ENCODE measurements at regions of chr14 and their contacts with region 1.

Region 1: DNA sequence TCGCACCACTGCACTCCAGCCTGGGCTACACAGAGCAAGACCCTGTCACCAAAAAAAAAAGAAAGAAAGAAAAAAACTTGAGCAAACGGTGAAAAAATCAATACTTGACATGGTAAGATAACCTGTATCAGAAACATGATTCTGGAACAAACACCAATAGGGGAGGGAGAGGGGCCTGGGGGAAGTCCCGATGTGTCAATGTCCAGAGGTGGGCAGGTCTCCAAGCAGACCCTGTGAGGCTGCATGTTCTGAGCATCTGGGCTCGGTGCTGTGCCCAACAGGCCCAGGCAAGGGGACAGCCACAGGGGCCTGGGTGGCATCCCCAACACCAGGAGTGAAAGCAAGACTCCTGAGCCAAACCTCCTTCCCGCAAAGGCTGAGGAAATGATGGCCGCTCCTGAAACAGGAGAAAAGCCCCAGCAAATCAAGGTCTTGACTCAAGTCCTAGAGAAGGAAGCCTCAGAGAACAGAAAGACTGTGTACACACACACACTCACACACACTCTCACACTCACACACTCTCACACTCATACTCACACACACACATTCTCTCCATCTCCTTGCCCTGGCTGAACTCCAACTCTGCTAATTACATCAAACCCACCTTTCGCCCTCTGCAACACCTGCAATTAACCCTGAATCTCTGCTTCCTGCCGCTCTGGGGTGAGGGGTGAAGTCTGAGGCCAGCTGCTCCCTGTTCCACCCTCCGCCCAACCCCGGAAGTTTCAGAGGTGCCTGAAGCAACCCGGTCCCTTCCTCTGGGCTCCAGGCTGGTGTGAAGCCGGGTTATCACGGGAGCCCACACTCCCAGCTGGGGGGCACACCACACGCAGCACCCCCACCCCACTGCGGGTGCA is 20.4 kb downstream of the CCDC88C start:
- DNase-seq: peak in 1 of 2 experiments; percentile 67
- H3K4me3 ChIP-seq: no peak overlapping the region
- H3K27ac ChIP-seq: no peak overlapping the region
- H3K4me1 ChIP-seq: peaks cover 35 to 66% (median 51%) of the 10 kb centered on the region in 4 experiments
- H3K27me3 ChIP-seq: no peaks in the 10 kb centered on the region
- CTCF ChIP-seq: no peak
- EP300 ChIP-seq: no peak
- POLR2A ChIP-seq: no peak
- RAD21 ChIP-seq: no peak

Region 2: DNA sequence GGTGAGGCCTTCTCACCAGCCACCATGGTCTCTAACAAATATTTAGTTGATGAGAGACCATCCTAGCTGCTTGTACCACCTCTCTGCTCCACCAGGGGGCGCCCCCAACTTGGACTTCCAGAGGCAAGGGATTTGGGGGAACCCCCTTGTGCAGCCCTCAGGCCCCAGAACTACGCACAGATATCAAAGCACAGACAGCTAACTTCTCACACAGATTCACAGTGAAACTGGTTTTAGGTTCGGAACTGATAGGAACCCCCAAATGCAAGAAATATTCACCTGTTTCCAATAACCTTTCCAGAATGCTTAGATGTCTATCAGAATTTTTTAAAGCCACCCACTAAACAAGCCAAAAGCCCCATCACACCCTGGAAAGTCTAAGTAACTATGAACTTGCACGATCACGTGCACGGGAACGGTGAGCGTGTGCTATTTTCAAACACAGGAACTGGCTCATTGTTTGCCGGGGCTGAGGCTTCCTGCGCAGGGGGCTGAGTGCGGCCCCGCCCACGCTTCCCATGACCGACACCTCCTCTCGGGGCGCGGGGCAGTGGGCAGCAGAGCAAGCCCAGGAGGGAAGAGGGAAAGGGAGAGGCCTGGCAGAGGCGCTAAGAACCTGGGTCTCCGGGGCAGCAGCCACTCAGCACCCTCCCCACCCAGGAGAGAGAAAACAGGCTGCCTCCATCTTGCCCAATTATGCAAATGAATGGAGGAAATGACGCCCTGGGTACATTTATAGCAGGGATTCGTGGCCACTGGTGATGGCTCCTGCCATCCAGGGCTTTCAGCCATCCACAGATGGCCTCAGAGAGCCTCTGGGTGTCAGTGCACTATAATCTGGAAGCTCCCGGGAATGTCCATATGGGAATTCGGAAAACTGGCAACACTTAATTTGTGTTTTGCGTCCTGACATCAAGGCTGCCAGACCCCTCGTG is 73.2 kb before region 1 on chr14:
- CTCF ChIA-PET with region 1: interaction called, 12 read pairs
- POLR2A ChIA-PET with region 1: no interaction called
- DNase-seq: peak; percentile 47 to 98
- H3K4me3 ChIP-seq: no peak overlapping the region
- H3K27ac ChIP-seq: no peak overlapping the region
- H3K4me1 ChIP-seq: peaks cover 0 to 2% (median 0%) of the 10 kb centered on the region in 4 experiments; a peak in 2 of 7 replicates
- H3K27me3 ChIP-seq: no peaks in the 10 kb centered on the region
- CTCF ChIP-seq: peak; percentile 80 to 90 (median 85)
- EP300 ChIP-seq: no peak
- POLR2A ChIP-seq: no peak
- RAD21 ChIP-seq: peak; percentile 89 to 95

Region 3: DNA sequence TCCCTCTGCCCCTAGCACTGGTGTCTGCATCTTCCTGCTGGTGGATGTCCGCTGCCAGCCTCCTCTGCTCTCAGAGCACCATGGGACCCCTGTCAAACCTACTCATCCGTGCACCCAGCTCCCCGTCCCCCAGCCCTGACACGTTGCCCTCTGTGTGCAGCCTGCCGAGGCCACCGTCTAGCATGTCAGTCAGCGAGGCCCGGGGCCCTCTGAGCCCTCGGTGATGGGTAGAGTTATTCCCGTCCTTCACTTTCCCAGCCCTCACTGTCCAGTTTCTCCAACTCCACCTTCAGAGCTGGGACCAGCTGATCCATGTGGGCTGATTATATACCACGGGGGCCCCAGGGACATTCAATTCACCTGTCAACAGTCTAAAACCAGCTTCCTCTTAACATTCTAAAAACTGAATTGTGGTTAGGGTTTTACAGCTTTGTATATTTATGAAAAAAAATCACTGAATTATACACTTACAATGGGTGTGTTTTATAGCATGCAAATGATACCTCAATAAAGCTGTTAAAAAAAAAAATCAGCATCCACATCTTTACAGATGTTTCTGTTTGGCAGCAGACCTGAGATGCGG is 40.9 kb before region 1 on chr14:
- CTCF ChIA-PET with region 1: interaction called, 14 read pairs
- POLR2A ChIA-PET with region 1: interaction called, 5 read pairs
- DNase-seq: no peak
- H3K4me3 ChIP-seq: no peak overlapping the region
- H3K27ac ChIP-seq: no peak overlapping the region
- H3K4me1 ChIP-seq: peaks cover 0 to 19% (median 12%) of the 10 kb centered on the region in 4 experiments; a peak in 6 of 7 replicates
- H3K27me3 ChIP-seq: no peaks in the 10 kb centered on the region
- CTCF ChIP-seq: no peak
- EP300 ChIP-seq: no peak
- POLR2A ChIP-seq: no peak
- RAD21 ChIP-seq: no peak

Region 4: GRCh38 chr14:91373591-91374254 is 23.5 kb before region 1 on chr14:
- CTCF ChIA-PET with region 1: interaction called, 31 read pairs
- POLR2A ChIA-PET with region 1: interaction called, 4 read pairs
- DNase-seq: no peak
- H3K4me3 ChIP-seq: no peak overlapping the region
- H3K27ac ChIP-seq: no peak overlapping the region
- H3K4me1 ChIP-seq: peaks cover 6 to 61% (median 36%) of the 10 kb centered on the region in 4 experiments
- H3K27me3 ChIP-seq: no peaks in the 10 kb centered on the region
- CTCF ChIP-seq: no peak
- EP300 ChIP-seq: no peak
- POLR2A ChIP-seq: no peak
- RAD21 ChIP-seq: no peak

Region 5: GRCh38 chr14:91410771-91411536 is 13.8 kb after region 1 on chr14:
- CTCF ChIA-PET with region 1: interaction called, 10 read pairs
- POLR2A ChIA-PET with region 1: interaction called, 66 read pairs
- DNase-seq: no peak
- H3K4me3 ChIP-seq: no peak overlapping the region
- H3K27ac ChIP-seq: no peak overlapping the region
- H3K4me1 ChIP-seq: peaks cover 2 to 19% (median 16%) of the 10 kb centered on the region in 4 experiments; a peak in 5 of 7 replicates
- H3K27me3 ChIP-seq: no peaks in the 10 kb centered on the region
- CTCF ChIP-seq: no peak
- EP300 ChIP-seq: no peak
- POLR2A ChIP-seq: no peak
- RAD21 ChIP-seq: no peak

Region 6: GRCh38 chr14:91418387-91419043 is 21.3 kb after region 1 on chr14:
- CTCF ChIA-PET with region 1: interaction called, 10 read pairs
- POLR2A ChIA-PET with region 1: interaction called, 66 read pairs
- DNase-seq: peak; percentile 39 to 96
- H3K4me3 ChIP-seq: peak overlapping the region; percentile 35 to 92 (median 63)
- H3K27ac ChIP-seq: no peak overlapping the region
- H3K4me1 ChIP-seq: peaks cover 7 to 26% (median 13%) of the 10 kb centered on the region in 4 experiments; a peak in 6 of 7 replicates
- H3K27me3 ChIP-seq: peaks cover 0 to 6% (median 3%) of the 10 kb centered on the region in 4 experiments; a peak in 2 of 7 replicates
- CTCF ChIP-seq: peak; percentile 90 to 92 (median 91)
- EP300 ChIP-seq: no peak
- POLR2A ChIP-seq: no peak
- RAD21 ChIP-seq: peak; percentile 90 to 91

Region 7: DNA sequence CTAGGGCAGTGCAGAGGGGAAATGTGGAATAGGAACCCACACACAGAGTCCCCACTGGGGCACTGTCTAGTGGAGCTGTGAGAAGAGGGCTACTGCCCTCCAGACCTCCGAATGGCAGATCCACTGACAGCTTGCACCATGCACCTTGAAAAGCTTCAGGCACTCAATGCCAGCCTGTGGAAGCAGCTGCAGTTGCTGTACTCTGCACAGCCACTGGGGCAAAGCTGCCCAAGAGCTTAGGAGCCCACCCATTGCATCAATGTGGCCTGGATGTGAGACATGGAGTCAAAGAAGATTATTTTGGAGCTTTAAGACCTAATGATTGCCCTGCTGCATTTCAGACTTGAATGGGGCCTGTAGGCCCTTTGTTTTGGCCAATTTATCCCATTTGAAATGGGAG is 42.2 kb after region 1 on chr14:
- CTCF ChIA-PET with region 1: no interaction called
- POLR2A ChIA-PET with region 1: no interaction called
- DNase-seq: no peak
- H3K4me3 ChIP-seq: no peak overlapping the region
- H3K27ac ChIP-seq: no peak overlapping the region
- H3K4me1 ChIP-seq: no peaks in the 10 kb centered on the region
- H3K27me3 ChIP-seq: no peaks in the 10 kb centered on the region
- CTCF ChIP-seq: peak in 1 of 3 experiments; percentile 3; a peak in 1 of 4 replicates
- EP300 ChIP-seq: no peak
- POLR2A ChIP-seq: no peak
- RAD21 ChIP-seq: no peak